ENCODE measurements at regions of chr6 and their contacts with region 1.

Region 1: DNA sequence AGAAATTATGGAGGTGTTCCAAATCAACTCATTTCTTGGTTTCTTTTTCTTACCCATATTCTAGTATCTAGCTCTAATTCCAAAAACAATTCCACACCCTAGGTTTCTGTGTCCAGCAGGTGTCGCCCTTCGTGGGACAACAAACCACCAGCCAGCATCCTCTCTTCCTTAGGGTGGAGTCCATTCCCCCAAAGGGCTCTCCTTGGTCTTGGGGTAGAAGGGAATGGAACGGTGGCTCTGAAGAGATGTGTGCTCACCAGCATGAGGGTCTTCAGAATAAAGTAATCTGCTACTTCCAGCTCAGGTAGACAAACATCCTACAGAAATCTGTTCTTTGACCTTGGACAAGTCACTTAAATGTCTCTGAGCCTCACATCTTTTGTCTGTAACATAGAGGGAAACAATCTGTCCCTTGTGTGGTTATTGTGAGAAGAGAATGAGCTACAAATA is 7.2 kb downstream of the HLA-DMB start:
- DNase-seq: peak in 9 of 10 donors; percentile 46 to 79 (median 67)
- H3K4me3 ChIP-seq: peak overlapping the region in 1 of 59 donors; percentile 13
- H3K27ac ChIP-seq: no peak overlapping the region
- H3K27me3 ChIP-seq: no peaks in the 10 kb centered on the region
- CTCF ChIP-seq: peak; percentile 67 to 93 (median 83)

Region 2: DNA sequence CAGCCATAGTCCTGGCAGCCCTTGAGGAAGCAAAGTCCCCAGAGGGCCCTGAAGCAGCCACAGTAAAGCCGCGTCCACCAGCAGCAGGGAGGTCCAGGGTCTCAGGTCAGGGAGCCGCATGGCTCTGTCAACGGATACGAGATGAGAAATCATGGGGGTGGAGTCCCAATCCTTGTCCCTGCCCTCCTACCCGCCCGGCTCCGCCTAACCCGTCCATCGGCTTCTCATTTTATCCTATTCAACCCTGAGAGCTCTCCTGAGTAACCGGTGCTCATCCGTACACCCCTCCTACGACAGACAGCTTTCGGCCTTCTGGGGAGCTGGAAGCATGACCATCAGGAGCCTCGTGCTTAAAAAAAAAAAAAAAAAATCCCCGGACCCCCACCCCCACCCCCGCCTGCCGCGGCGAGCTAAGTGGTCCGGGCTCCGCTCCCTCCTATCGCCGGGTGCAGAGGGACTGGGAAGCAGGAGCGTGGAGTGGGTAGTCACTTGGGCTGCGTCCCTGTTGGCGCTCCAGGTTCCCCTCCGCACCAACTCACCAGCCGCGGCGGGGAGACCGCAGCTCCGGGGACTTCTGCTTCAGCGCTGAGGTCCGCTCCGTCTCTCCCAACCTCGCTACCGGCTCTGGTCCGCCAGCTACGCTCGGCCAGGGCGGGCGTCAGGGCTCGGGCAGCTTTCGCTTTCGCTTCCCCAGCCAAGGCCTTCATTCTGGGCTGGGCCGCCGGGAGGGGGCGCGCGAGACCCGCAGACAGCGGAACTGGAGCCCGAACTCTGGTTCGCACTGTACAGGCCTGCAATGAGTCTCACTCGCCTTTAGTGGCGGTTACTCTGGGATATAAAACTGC is 95.3 kb before region 1 on chr6 and contains the start of gene TAP2:
- intact Hi-C with region 1: no loop called
- DNase-seq: peak; percentile 90 to 97 (median 96)
- H3K4me3 ChIP-seq: peak within 1 kb of the TSS; percentile 52 to 94 (median 81)
- H3K27ac ChIP-seq: peak within 1 kb of the TSS; percentile 73 to 99 (median 96)
- H3K27me3 ChIP-seq: no peaks in the 10 kb centered on the region
- CTCF ChIP-seq: peak; percentile 85 to 100 (median 97)
- total RNA-seq, gene TAP2: 12.3 to 50.8 (median 24.2) TPM

Region 3: GRCh38 chr6:32894080-32895005 is 39.3 kb before region 1 on chr6:
- intact Hi-C with region 1: loop called in 1 of 2 experiments (anchors 5 kb)
- DNase-seq: peak; percentile 86 to 97 (median 93)
- H3K4me3 ChIP-seq: peak overlapping the region; percentile 55 to 98 (median 86)
- H3K27ac ChIP-seq: peak overlapping the region; percentile 1 to 96 (median 87)
- H3K27me3 ChIP-seq: no peaks in the 10 kb centered on the region
- CTCF ChIP-seq: peak in 43 of 56 donors; percentile 8 to 50 (median 28)

Region 4: GRCh38 chr6:33391278-33391921 is 457.7 kb after region 1 on chr6 and contains the start of gene KIFC1:
- intact Hi-C with region 1: no loop called
- DNase-seq: peak; percentile 97 to 100 (median 99)
- H3K4me3 ChIP-seq: peak within 1 kb of the TSS; percentile 25 to 78 (median 62)
- H3K27ac ChIP-seq: peak within 1 kb of the TSS; percentile 78 to 99 (median 95)
- H3K27me3 ChIP-seq: no peaks in the 10 kb centered on the region
- CTCF ChIP-seq: peak; percentile 96 to 100 (median 99)
- total RNA-seq, gene KIFC1: 0.11 to 3.3 (median 0.62) TPM in 96 of 120 experiments, not detected in the others

Measured in dorsolateral prefrontal cortex (tissue), 120 donors.